Activated CD4-positive, alpha-beta memory T cell treated with anti-CD3 and anti-CD28 coated beads, Interleukin-2, amount 10 ng/mL, durations not matched to agents 7 days and 5 days (primary cell): ENCODE measurements at regions of chr17 and their contacts with region 1.

Region 1: GRCh38 chr17:78708510-78708973 is 73.5 kb downstream of the CYTH1 start:
- DNase-seq: peak; percentile 68
- H3K4me3 Mint-ChIP-seq: peak overlapping the region; percentile 29
- H3K27ac Mint-ChIP-seq: peak overlapping the region; percentile 80
- H3K4me1 Mint-ChIP-seq: peaks cover 68% of the 10 kb centered on the region
- H3K27me3 Mint-ChIP-seq: no peaks in the 10 kb centered on the region

Region 2: GRCh38 chr17:78497115-78497540 is 211.4 kb before region 1 on chr17:
- CTCF ChIA-PET with region 1: interaction called, 17 read pairs
- POLR2A ChIA-PET with region 1: no interaction called
- DNase-seq: peak; percentile 65
- H3K4me3 Mint-ChIP-seq: no peak overlapping the region
- H3K27ac Mint-ChIP-seq: no peak overlapping the region
- H3K4me1 Mint-ChIP-seq: peaks cover 1% of the 10 kb centered on the region
- H3K27me3 Mint-ChIP-seq: no peaks in the 10 kb centered on the region

Region 3: DNA sequence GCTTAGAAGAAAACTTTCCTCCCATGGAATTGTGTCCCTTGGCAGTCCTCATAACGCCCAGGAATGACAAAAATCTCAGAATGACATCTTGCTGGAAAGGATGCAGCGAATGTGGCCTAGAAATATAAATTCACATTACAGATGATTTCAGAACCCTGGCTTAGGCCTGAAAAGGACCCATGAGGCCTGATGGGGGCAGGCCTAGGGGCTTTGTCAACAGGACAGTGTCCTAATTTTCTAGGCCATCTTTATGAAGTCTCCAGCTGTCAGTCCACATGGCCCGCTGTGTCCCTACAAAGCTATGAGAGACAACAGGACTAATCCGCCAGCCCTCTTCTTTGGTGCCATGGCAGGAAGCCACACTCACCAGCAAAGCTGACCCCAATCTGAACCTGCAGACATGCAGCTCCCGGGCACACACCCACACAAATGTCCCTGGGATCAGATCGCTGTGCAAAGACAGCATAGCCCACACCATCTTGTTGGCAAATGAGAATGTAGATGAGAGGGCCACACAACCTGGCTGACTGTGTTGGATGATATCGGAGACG is 91.0 kb before region 1 on chr17:
- CTCF ChIA-PET with region 1: no interaction called
- POLR2A ChIA-PET with region 1: no interaction called
- DNase-seq: no peak
- H3K4me3 Mint-ChIP-seq: no peak overlapping the region
- H3K27ac Mint-ChIP-seq: no peak overlapping the region
- H3K4me1 Mint-ChIP-seq: no peaks in the 10 kb centered on the region
- H3K27me3 Mint-ChIP-seq: peaks cover 8% of the 10 kb centered on the region

Region 4: DNA sequence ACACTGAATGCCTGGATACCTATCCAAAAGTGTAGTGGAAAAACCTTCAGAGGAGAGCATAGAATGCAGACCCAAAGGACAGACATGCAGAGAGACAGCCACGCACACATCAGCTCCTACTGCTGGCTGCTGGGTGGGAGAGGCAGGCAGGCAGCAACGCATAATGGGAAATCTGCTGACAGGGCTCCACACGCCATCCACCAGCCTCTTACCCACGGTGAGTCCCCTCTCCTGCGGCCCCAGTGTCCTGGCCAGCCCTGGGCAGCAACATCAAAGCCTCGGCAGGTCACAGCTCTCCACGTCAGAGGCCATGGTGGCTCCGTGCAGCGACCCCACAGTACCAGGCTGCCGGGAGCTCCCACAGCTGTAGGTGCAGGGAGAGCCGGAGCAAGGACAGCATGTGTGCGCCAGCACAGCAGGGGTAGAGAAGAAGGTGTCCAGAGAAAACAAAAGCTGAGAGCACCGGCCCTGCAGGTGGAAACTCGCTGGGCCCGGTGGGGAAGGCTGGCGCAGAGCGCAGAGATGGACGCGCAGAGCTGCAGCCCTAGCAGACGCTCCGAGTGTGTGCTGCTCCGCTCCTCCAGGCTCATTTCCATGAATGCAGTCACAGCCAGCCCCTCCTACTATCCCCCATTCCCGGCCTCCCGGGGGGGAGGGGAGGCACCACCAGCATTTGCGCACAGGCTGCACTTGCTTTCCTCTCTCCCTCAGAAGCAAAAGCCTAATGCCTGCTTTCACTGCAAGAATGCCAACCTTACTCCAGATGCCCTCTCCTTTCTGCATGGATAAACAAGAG is 14.7 kb after region 1 on chr17:
- CTCF ChIA-PET with region 1: interaction called, 18 read pairs
- POLR2A ChIA-PET with region 1: interaction called, 35 read pairs
- DNase-seq: no peak
- H3K4me3 Mint-ChIP-seq: no peak overlapping the region
- H3K27ac Mint-ChIP-seq: no peak overlapping the region
- H3K4me1 Mint-ChIP-seq: peaks cover 92% of the 10 kb centered on the region
- H3K27me3 Mint-ChIP-seq: no peaks in the 10 kb centered on the region